Activated naive CD4-positive, alpha-beta T cell treated with anti-CD3 and anti-CD28 coated beads for 36 hours (primary cell): ENCODE measurements at regions of chr1 and their contacts with region 1.

Region 1: GRCh38 chr1:12467570-12468286 is 150.3 kb downstream of the DHRS3 start:
- DNase-seq: no peak
- H3K4me3 Mint-ChIP-seq: no peak overlapping the region
- H3K27ac Mint-ChIP-seq: peak overlapping the region; percentile 86
- H3K4me1 Mint-ChIP-seq: peaks cover 57% of the 10 kb centered on the region
- H3K27me3 Mint-ChIP-seq: no peaks in the 10 kb centered on the region

Region 2: GRCh38 chr1:12486401-12487005 is 18.8 kb after region 1 on chr1:
- CTCF ChIA-PET with region 1: no interaction called
- intact Hi-C with region 1: no loop called
- DNase-seq: no peak
- H3K4me3 Mint-ChIP-seq: no peak overlapping the region
- H3K27ac Mint-ChIP-seq: no peak overlapping the region
- H3K4me1 Mint-ChIP-seq: peaks cover 14% of the 10 kb centered on the region
- H3K27me3 Mint-ChIP-seq: no peaks in the 10 kb centered on the region

Region 3: DNA sequence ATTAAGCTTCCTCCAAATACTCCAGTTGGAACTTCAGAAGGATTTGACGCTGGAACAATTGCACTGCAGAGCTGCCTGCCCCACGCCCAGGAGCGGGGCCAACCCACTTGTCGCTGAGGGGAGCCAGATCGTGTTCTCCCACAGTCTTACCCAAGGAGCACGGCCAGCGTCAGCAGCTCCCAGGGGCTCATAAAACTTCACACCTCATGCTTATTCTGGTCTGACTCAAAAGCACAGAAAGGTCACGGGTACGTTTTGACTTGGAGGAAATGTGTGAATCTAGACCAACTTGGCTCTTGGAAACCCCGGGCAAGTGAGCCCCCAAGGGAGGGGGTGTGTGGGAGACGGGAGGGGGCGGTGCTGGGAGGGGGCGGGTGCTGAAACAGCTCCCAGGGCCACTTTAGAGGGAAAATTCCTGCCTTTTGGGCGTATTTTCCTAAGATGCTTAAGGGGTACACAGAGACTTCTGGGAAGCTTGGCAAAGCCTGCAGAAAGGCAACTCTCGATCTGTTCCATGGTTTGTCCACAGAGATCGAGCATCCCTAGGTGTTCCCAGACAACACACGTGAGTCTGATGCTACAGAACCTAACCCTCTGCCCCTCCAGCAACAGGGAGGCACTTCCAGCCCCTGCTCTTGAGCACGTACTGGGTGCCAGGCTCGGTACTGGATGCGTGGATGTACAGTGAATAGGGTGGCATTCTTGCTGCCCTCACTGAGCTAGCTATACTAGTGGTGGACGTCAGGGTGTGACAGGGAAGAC is 51.4 kb after region 1 on chr1:
- CTCF ChIA-PET with region 1: no interaction called
- intact Hi-C with region 1: loop called (anchors 1 kb)
- DNase-seq: peak; percentile 84
- H3K4me3 Mint-ChIP-seq: no peak overlapping the region
- H3K27ac Mint-ChIP-seq: peak overlapping the region; percentile 67
- H3K4me1 Mint-ChIP-seq: peaks cover 43% of the 10 kb centered on the region
- H3K27me3 Mint-ChIP-seq: no peaks in the 10 kb centered on the region